GM12878 (cell line): ENCODE measurements at regions of chr1 and their contacts with region 1.

Region 1: DNA sequence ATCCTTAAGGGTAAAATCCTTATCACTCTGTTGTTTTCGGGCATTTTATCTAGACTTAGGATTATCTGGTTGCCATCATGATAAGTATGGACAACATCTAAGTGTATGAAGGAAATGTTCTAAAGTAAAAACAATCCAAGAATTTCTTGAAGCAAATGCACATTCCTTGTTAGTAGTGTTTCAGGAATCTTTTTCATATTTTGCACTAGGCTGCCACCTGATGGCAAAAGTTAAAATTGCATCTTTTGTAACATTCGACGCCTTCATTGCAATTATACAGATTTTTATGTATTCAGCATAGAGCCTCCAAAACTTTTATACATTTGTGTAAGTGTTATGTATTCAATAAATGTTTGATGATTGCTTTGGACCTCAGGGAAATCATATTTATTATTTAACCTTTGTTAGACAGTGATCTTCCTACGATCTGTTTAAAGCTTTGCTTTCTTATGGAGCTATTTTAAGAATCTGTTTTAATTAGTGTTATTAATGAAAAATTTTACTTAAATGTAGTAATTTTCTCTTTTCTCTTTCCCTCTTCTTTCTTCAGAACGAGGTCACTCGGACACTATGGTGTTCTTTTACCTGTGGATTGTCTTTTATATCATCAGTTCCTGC is 49.4 kb upstream of the KIAA1614 start:
- DNase-seq: no peak
- ATAC-seq: no peak
- H3K4me3 ChIP-seq: no peak overlapping the region
- H3K27ac ChIP-seq: no peak overlapping the region
- H3K4me1 ChIP-seq: no peaks in the 10 kb centered on the region
- H3K27me3 ChIP-seq: no peaks in the 10 kb centered on the region
- CTCF ChIP-seq: peak; percentile 51 to 69 (median 59); a peak in 5 of 6 replicates
- EP300 ChIP-seq: no peak
- POLR2A ChIP-seq: no peak
- RAD21 ChIP-seq: peak; percentile 88

Region 2: DNA sequence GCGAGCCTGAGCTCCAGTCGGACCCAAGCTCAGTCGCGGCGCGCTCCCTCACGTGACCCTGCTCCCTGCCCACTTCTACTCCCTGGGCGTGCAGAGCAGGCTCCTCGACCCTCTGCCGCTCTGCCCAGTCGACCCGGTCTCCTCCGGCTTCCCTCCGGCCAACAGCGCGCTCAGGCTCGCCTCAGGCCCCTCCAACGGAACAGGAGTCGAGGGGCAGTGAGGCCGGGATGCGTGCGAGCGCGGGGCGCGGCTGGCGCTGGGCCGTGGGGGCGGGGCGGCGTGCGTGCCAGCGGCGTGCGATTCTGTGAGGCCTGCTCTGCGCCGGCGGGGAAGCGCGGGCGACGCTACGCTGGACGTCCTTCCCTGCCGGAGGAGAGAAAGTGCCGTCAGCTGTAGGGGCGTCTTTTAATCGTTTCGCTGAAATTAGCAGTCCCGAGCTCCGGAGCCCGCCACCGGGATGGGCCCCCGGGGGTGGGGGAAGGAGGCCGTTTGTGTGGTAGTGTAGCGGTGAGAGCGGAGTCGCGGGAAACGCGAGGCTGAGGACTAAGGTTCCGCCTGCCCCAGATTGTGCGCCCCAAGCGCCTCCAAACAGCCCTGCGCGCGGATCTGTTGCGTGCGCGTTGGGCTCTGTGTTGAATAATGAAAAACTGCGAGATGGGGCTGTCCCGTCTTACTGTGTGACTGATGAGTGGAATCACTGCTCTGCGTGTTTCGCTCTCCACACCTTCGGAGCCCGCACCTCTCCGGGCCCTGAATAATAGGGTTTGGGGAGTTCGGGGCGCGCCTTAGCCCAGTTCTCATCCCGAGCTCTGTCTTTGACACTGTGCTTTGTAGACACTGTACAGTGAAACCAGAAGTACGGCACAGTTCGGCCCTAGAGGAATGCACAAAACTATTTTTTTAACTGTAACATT is 360.6 kb before region 1 on chr1 and contains the start of gene ACBD6:
- CTCF ChIA-PET with region 1: interaction called, 20 read pairs
- POLR2A ChIA-PET with region 1: interaction called, 4 read pairs
- RAD21 ChIA-PET with region 1: interaction called, 3 read pairs
- SMC1A ChIA-PET with region 1: interaction called, 5 read pairs
- in situ Hi-C with region 1: no loop called
- intact Hi-C with region 1: no loop called
- DNase-seq: peak; percentile 51
- ATAC-seq: peak; percentile 91
- H3K4me3 ChIP-seq: peak within 1 kb of the TSS; percentile 82
- H3K27ac ChIP-seq: peak within 1 kb of the TSS; percentile 94
- H3K4me1 ChIP-seq: no peaks in the 10 kb centered on the region
- H3K27me3 ChIP-seq: no peaks in the 10 kb centered on the region
- CTCF ChIP-seq: peak; percentile 5 to 33 (median 14); a peak in 3 of 6 replicates
- EP300 ChIP-seq: peak in 1 of 2 experiments; percentile 54; a peak in 3 of 4 replicates
- POLR2A ChIP-seq: peak; percentile 92; the same call in 1 of the 2 replicates
- RAD21 ChIP-seq: no peak
- polyA plus RNA-seq, gene ACBD6: 15.0 to 38.7 TPM

Region 3: GRCh38 chr1:180533266-180533987 is 329.8 kb before region 1 on chr1:
- CTCF ChIA-PET with region 1: interaction called, 373 read pairs
- POLR2A ChIA-PET with region 1: interaction called, 5 read pairs
- RAD21 ChIA-PET with region 1: interaction called, 156 read pairs
- SMC1A ChIA-PET with region 1: interaction called, 247 read pairs
- in situ Hi-C with region 1: loop called (anchors 5 kb)
- intact Hi-C with region 1: loop called (anchors 1 kb)
- DNase-seq: no peak
- ATAC-seq: peak; percentile 97
- H3K4me3 ChIP-seq: no peak overlapping the region
- H3K27ac ChIP-seq: no peak overlapping the region
- H3K4me1 ChIP-seq: no peaks in the 10 kb centered on the region
- H3K27me3 ChIP-seq: peaks cover 0 to 2% of the 10 kb centered on the region in 2 experiments; a peak in 2 of 4 replicates
- CTCF ChIP-seq: peak; percentile 82 to 95 (median 88)
- EP300 ChIP-seq: no peak
- POLR2A ChIP-seq: no peak
- RAD21 ChIP-seq: peak; percentile 91

Region 4: GRCh38 chr1:180640531-180640949 is 222.7 kb before region 1 on chr1:
- CTCF ChIA-PET with region 1: interaction called, 110 read pairs
- POLR2A ChIA-PET with region 1: no interaction called
- RAD21 ChIA-PET with region 1: interaction called, 24 read pairs
- SMC1A ChIA-PET with region 1: interaction called, 54 read pairs
- in situ Hi-C with region 1: no loop called
- intact Hi-C with region 1: no loop called
- DNase-seq: no peak
- ATAC-seq: no peak
- H3K4me3 ChIP-seq: no peak overlapping the region
- H3K27ac ChIP-seq: no peak overlapping the region
- H3K4me1 ChIP-seq: no peaks in the 10 kb centered on the region
- H3K27me3 ChIP-seq: no peaks in the 10 kb centered on the region
- CTCF ChIP-seq: no peak
- EP300 ChIP-seq: no peak
- POLR2A ChIP-seq: no peak
- RAD21 ChIP-seq: no peak

Region 5: GRCh38 chr1:180778782-180779398 is 84.4 kb before region 1 on chr1:
- CTCF ChIA-PET with region 1: interaction called, 36 read pairs
- POLR2A ChIA-PET with region 1: no interaction called
- RAD21 ChIA-PET with region 1: interaction called, 14 read pairs
- SMC1A ChIA-PET with region 1: interaction called, 20 read pairs
- in situ Hi-C with region 1: no loop called
- intact Hi-C with region 1: loop called (anchors 5 kb)
- DNase-seq: no peak
- ATAC-seq: peak; percentile 80
- H3K4me3 ChIP-seq: no peak overlapping the region
- H3K27ac ChIP-seq: no peak overlapping the region
- H3K4me1 ChIP-seq: no peaks in the 10 kb centered on the region
- H3K27me3 ChIP-seq: no peaks in the 10 kb centered on the region
- CTCF ChIP-seq: peak; percentile 45 to 60 (median 58)
- EP300 ChIP-seq: no peak
- POLR2A ChIP-seq: no peak
- RAD21 ChIP-seq: peak; percentile 56

Region 6: GRCh38 chr1:180849036-180849775 is 14.1 kb before region 1 on chr1:
- CTCF ChIA-PET with region 1: interaction called, 27 read pairs
- POLR2A ChIA-PET with region 1: no interaction called
- RAD21 ChIA-PET with region 1: interaction called, 17 read pairs
- SMC1A ChIA-PET with region 1: interaction called, 26 read pairs
- in situ Hi-C with region 1: no loop called
- intact Hi-C with region 1: no loop called
- DNase-seq: no peak
- ATAC-seq: peak; percentile 66
- H3K4me3 ChIP-seq: no peak overlapping the region
- H3K27ac ChIP-seq: no peak overlapping the region
- H3K4me1 ChIP-seq: peaks cover 22% of the 10 kb centered on the region
- H3K27me3 ChIP-seq: no peaks in the 10 kb centered on the region
- CTCF ChIP-seq: no peak
- EP300 ChIP-seq: no peak
- POLR2A ChIP-seq: no peak
- RAD21 ChIP-seq: no peak

Region 7: GRCh38 chr1:182309631-182310351 is 1446.5 kb after region 1 on chr1:
- CTCF ChIA-PET with region 1: no interaction called
- POLR2A ChIA-PET with region 1: no interaction called
- RAD21 ChIA-PET with region 1: no interaction called
- SMC1A ChIA-PET with region 1: no interaction called
- in situ Hi-C with region 1: no loop called
- intact Hi-C with region 1: no loop called
- DNase-seq: no peak
- ATAC-seq: no peak
- H3K4me3 ChIP-seq: no peak overlapping the region
- H3K27ac ChIP-seq: no peak overlapping the region
- H3K4me1 ChIP-seq: no peaks in the 10 kb centered on the region
- H3K27me3 ChIP-seq: peaks cover 1 to 2% of the 10 kb centered on the region in 2 experiments; a peak in 1 of 4 replicates
- CTCF ChIP-seq: no peak
- EP300 ChIP-seq: no peak
- POLR2A ChIP-seq: no peak
- RAD21 ChIP-seq: no peak